CD8-positive, alpha-beta T cell (primary cell): ENCODE measurements at regions of chr10 and their contacts with region 1.

Region 1: DNA sequence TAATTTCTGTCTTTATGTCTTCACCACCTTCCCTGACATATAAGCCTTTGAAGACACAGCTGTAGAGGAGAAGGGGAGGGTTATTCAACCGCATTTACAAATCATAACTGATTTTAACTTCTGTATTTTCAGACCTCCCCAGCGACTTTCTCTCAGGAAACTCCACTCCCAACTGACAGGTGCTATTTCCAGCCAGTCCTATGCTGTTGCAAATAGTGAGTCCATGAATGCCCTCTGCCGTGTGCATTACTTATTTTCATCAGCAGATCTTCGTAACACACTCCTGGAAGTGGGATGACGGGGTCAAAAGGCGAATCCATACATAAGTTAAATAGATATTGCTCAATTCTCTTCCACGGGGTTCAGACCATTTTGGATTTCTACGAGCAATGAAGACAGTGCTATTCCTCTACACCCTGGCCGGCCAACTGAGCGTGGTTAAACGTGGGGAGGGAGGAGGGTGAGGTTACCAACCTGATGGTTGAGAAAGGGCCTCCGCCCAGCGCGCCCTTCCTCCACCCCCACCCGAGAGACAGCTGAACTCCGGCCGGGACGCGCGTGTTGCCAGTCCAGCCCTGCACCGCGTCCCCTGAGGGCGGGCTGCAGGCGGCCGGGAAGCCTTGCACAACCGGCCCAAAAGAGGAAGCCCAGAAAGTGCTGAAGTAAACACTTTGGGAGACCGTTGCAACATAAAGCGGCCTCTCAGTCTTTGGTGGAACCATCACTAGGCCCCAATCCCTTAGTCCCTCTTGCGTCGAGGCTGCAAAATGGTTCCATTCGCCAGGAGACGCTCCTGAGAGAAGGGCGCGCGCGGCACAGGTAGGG is at the start of gene APBB1IP:
- DNase-seq: peak; percentile 28 to 79 (median 57)
- ATAC-seq: peak; percentile 43
- H3K4me3 ChIP-seq: peak within 1 kb of the TSS; percentile 85 to 94
- H3K4me3 Mint-ChIP-seq: peak within 1 kb of the TSS; percentile 93
- H3K27ac ChIP-seq: peak within 1 kb of the TSS; percentile 83 to 90
- H3K27ac Mint-ChIP-seq: peak within 1 kb of the TSS; percentile 98
- H3K4me1 ChIP-seq: peaks cover 40% of the 10 kb centered on the region
- H3K4me1 Mint-ChIP-seq: peaks cover 52% of the 10 kb centered on the region
- H3K27me3 ChIP-seq: no peaks in the 10 kb centered on the region
- H3K27me3 Mint-ChIP-seq: no peaks in the 10 kb centered on the region
- CTCF ChIP-seq: no peak
- total RNA-seq, gene APBB1IP: 36.4 to 36.8 TPM

Region 2: GRCh38 chr10:26296355-26296754 is 141.5 kb before region 1 on chr10:
- CTCF ChIA-PET with region 1: no interaction called
- POLR2A ChIA-PET with region 1: no interaction called
- intact Hi-C with region 1: no loop called
- DNase-seq: no peak
- ATAC-seq: no peak
- H3K4me3 ChIP-seq: no peak overlapping the region
- H3K4me3 Mint-ChIP-seq: no peak overlapping the region
- H3K27ac ChIP-seq: no peak overlapping the region
- H3K27ac Mint-ChIP-seq: no peak overlapping the region
- H3K4me1 ChIP-seq: no peaks in the 10 kb centered on the region
- H3K4me1 Mint-ChIP-seq: no peaks in the 10 kb centered on the region
- H3K27me3 ChIP-seq: no peaks in the 10 kb centered on the region
- H3K27me3 Mint-ChIP-seq: peaks cover 26% of the 10 kb centered on the region
- CTCF ChIP-seq: no peak

Region 3: GRCh38 chr10:26468700-26469099 is 30.9 kb after region 1 on chr10:
- CTCF ChIA-PET with region 1: interaction called, 4 read pairs
- POLR2A ChIA-PET with region 1: interaction called, 15 read pairs
- intact Hi-C with region 1: loop called in 1 of 2 experiments (anchors 2 kb)
- DNase-seq: peak in 8 of 9 experiments; percentile 28 to 86 (median 69)
- ATAC-seq: peak; percentile 81
- H3K4me3 ChIP-seq: peak overlapping the region in 1 of 2 experiments; percentile 7
- H3K4me3 Mint-ChIP-seq: peak overlapping the region; percentile 72
- H3K27ac ChIP-seq: peak overlapping the region; percentile 6 to 47
- H3K27ac Mint-ChIP-seq: peak overlapping the region; percentile 91
- H3K4me1 ChIP-seq: peaks cover 94% of the 10 kb centered on the region
- H3K4me1 Mint-ChIP-seq: peaks cover 89% of the 10 kb centered on the region
- H3K27me3 ChIP-seq: no peaks in the 10 kb centered on the region
- H3K27me3 Mint-ChIP-seq: no peaks in the 10 kb centered on the region
- CTCF ChIP-seq: no peak

Region 4: DNA sequence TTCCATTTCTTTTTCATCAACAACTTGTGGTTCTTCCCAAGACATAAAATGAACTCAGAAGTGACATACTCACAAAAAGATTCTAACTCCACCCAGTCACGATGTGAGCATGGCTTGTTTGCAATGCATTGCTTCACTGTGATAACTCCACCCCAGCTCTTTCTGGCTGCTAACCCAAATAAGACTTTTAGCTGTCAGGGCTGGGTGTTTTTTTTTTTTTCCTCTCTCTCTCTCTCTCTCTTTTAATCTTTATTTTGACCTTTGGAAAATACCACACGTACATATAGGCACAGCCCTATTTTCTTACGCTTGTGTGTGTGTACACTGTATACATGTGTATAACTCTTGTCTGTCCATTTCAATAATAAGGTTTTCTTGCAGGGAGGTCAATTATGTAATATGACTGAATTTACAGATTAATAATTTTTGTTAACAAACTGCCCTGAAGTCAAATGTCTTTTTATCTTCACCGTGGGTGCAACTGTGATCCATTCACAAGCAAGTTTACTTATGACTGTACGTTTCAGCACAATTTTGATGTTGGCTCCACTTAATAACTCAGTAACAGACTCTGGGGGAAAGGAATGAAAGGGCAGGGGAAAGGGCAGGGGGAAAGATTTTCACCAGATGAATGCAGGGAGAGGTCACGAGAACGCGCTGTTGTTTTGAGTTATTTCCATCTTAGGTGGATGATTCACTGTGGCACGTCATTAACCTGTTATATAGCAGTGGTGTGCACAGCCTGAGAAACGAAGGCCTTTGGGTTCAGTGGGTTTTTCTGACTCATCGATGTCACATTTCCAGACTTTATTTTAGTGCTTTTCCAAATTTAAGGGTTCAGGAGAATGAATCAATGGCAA is 49.4 kb after region 1 on chr10:
- CTCF ChIA-PET with region 1: interaction called, 3 read pairs
- POLR2A ChIA-PET with region 1: interaction called, 10 read pairs
- intact Hi-C with region 1: loop called (anchors 1 to 2 kb)
- DNase-seq: peak; percentile 16 to 92 (median 69)
- ATAC-seq: peak; percentile 75
- H3K4me3 ChIP-seq: peak overlapping the region in 1 of 2 experiments; percentile 2
- H3K4me3 Mint-ChIP-seq: peak overlapping the region; percentile 66
- H3K27ac ChIP-seq: peak overlapping the region; percentile 73 to 91
- H3K27ac Mint-ChIP-seq: peak overlapping the region; percentile 97
- H3K4me1 ChIP-seq: peaks cover 66% of the 10 kb centered on the region
- H3K4me1 Mint-ChIP-seq: peaks cover 71% of the 10 kb centered on the region
- H3K27me3 ChIP-seq: no peaks in the 10 kb centered on the region
- H3K27me3 Mint-ChIP-seq: no peaks in the 10 kb centered on the region
- CTCF ChIP-seq: no peak

Region 5: DNA sequence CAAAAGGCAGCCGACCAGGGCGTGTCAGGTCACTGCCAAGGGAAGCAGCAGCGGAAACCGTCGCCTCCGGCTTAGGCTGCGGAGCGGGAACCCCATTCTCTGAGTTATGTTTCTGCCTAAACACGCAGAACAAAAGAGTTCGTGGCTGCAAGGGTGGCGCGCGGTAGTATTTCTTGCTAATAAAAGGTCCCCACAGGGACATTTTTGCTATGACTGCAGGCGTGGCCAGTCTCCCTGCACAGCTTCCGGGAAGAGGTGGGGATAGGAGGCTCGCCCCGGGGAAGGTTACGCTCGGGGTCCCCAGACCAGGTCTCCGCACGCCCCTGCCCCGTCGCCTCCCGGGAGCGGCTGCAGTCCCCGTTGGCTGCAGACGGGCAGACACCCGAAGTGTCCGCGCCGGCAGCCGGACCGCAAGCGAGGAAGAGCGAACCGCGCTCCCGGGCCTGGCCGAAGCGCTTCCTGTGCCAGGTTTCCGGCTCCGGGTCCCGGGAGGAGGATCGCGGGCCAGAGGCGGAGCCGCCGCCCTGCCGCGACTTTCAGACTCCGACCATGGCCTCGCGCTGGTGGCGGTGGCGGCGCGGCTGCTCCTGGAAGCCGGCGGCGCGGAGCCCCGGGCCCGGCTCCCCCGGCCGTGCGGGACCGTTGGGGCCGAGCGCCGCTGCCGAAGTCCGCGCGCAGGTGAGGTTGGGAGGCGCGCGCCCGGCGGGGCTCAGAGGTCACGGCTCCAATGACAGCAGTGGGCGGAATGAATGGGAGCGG is 259.5 kb after region 1 on chr10 and contains the start of gene PDSS1:
- CTCF ChIA-PET with region 1: no interaction called
- POLR2A ChIA-PET with region 1: no interaction called
- intact Hi-C with region 1: loop called in 1 of 2 experiments (anchors 10 kb)
- DNase-seq: peak; percentile 23 to 82 (median 60)
- ATAC-seq: peak; percentile 73
- H3K4me3 ChIP-seq: peak within 1 kb of the TSS; percentile 85 to 92
- H3K4me3 Mint-ChIP-seq: peak within 1 kb of the TSS; percentile 94
- H3K27ac ChIP-seq: peak within 1 kb of the TSS; percentile 69 to 81
- H3K27ac Mint-ChIP-seq: peak within 1 kb of the TSS; percentile 93
- H3K4me1 ChIP-seq: peaks cover 18% of the 10 kb centered on the region
- H3K4me1 Mint-ChIP-seq: peaks cover 35% of the 10 kb centered on the region
- H3K27me3 ChIP-seq: no peaks in the 10 kb centered on the region
- H3K27me3 Mint-ChIP-seq: no peaks in the 10 kb centered on the region
- CTCF ChIP-seq: no peak
- total RNA-seq, gene PDSS1: 3.4 to 3.7 TPM